H1 (cell line): ENCODE measurements at regions of chr17 and their contacts with region 1.

Region 1: DNA sequence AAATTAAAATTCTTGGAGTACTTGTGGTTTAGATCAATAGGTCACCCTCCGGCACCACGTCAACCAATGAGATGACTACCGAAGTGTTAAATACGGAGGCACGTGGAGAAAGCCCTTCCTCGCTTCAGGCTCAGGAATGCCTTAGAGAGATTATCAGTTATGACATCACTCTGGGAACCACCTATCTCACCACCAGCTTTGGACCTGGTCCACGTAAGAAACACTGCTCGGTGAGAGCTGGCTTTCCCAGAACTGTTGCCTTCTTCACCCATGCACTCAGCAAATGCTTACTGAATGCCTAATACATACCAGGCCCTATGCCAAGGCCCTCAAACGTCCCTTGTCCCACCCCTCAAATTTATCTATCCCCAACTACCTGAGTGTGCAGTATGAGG is 71.3 kb downstream of the SMG6 start:
- DNase-seq: no peak
- H3K4me3 ChIP-seq: no peak overlapping the region
- H3K27ac ChIP-seq: no peak overlapping the region
- H3K4me1 ChIP-seq: no peaks in the 10 kb centered on the region
- H3K27me3 ChIP-seq: no peaks in the 10 kb centered on the region
- CTCF ChIP-seq: no peak
- EP300 ChIP-seq: no peak
- POLR2A ChIP-seq: no peak
- RAD21 ChIP-seq: no peak

Region 2: DNA sequence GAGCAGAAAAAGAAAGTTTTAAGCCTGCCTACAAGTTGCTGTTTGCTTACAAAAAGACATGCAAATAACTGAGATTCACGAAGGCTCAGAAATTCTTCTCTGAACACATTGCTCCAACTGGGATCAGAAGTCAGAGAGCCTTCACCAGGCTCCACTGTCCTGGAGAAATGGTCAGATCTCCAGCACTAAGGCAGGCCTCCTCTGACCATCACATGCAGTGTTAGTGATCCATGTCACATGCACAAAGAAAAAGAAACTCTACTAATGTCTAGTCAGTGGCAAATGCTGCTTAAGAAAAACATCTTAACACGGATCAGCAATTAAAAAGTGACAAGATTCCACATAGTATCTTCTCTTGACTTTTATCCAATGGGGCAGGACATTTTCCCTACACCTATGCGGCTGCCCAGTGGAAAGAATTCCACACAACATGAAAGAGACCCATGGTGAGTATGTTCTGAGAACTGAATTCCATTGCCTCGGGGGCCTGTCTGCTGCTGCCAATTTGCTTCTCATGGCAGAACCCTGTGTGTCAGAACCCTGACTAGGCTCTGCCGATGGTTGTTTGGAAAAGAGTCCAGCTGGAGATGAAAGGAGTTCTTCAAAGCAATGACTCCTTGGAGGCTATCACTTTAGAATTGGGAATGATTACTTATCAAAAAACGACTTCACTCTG is 80.7 kb before region 1 on chr17:
- CTCF ChIA-PET with region 1: interaction called, 11 read pairs
- POLR2A ChIA-PET with region 1: no interaction called
- DNase-seq: no peak
- H3K4me3 ChIP-seq: no peak overlapping the region
- H3K27ac ChIP-seq: no peak overlapping the region
- H3K4me1 ChIP-seq: no peaks in the 10 kb centered on the region
- H3K27me3 ChIP-seq: no peaks in the 10 kb centered on the region
- CTCF ChIP-seq: no peak
- EP300 ChIP-seq: no peak
- POLR2A ChIP-seq: no peak
- RAD21 ChIP-seq: no peak

Region 3: GRCh38 chr17:2215616-2216364 is 16.5 kb before region 1 on chr17:
- CTCF ChIA-PET with region 1: interaction called, 15 read pairs
- POLR2A ChIA-PET with region 1: no interaction called
- DNase-seq: peak in 1 of 2 experiments; percentile 59
- H3K4me3 ChIP-seq: peak overlapping the region in 1 of 4 experiments; percentile 1; a peak in 1 of 8 replicates
- H3K27ac ChIP-seq: no peak overlapping the region
- H3K4me1 ChIP-seq: peaks cover 0 to 11% (median 5%) of the 10 kb centered on the region in 4 experiments; a peak in 5 of 7 replicates
- H3K27me3 ChIP-seq: no peaks in the 10 kb centered on the region
- CTCF ChIP-seq: no peak
- EP300 ChIP-seq: no peak
- POLR2A ChIP-seq: no peak
- RAD21 ChIP-seq: no peak

Region 4: DNA sequence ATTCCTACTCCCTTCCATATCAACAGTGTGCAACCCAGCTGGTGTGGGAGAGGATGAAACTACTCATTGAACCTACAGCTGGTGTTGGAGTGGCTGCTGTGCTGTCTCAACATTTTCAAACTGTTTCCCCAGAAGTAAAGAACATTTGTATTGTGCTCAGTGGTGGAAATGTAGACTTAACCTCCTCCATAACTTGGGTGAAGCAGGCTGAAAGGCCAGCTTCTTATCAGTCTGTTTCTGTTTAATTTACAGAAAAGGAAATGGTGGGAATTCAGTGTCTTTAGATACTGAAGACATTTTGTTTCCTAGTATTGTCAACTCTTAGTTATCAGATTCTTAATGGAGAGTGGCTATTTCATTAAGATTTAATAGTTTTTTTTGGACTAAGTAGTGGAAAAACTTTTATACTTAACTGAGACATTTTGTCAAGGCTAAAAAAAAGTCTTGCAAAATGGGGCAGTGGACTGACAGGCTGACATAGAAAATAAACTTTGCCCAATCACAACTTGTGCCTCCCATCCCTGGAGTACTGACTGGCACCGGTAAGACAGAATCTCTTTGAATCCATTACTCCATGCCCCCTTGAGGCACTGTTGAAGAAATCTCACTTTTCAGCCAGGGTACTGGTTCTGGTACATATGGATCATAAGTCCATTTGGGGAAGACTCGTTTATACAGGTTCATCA is 91.5 kb after region 1 on chr17:
- CTCF ChIA-PET with region 1: no interaction called
- POLR2A ChIA-PET with region 1: no interaction called
- DNase-seq: no peak
- H3K4me3 ChIP-seq: no peak overlapping the region
- H3K27ac ChIP-seq: no peak overlapping the region
- H3K4me1 ChIP-seq: no peaks in the 10 kb centered on the region
- H3K27me3 ChIP-seq: no peaks in the 10 kb centered on the region
- CTCF ChIP-seq: no peak
- EP300 ChIP-seq: no peak
- POLR2A ChIP-seq: no peak
- RAD21 ChIP-seq: no peak